ENCODE measurements at regions of chr21 and their contacts with region 1.

Region 1: GRCh38 chr21:44873356-44874239 is at the start of gene PTTG1IP:
- DNase-seq: peak; percentile 98 to 100 (median 99)
- ATAC-seq: peak; percentile 83 to 87 (median 85)
- H3K4me3 ChIP-seq: peak within 1 kb of the TSS; percentile 66 to 98 (median 86)
- H3K27ac ChIP-seq: peak within 1 kb of the TSS; percentile 90 to 99 (median 95)
- H3K4me1 ChIP-seq: peaks cover 0 to 81% (median 52%) of the 10 kb centered on the region in 12 donors
- H3K27me3 ChIP-seq: no peaks in the 10 kb centered on the region
- CTCF ChIP-seq: no peak
- POLR2A ChIP-seq: peak; percentile 69 to 92
- total RNA-seq, gene PTTG1IP: 134 to 319 (median 172) TPM

Region 2: GRCh38 chr21:44801468-44802395 is 71.9 kb before region 1 on chr21 and contains the start of gene UBE2G2:
- intact Hi-C with region 1: loop called (anchors 2 to 5 kb)
- DNase-seq: peak; percentile 82 to 93 (median 86)
- ATAC-seq: peak; percentile 81 to 98 (median 96)
- H3K4me3 ChIP-seq: peak within 1 kb of the TSS; percentile 71 to 97 (median 89)
- H3K27ac ChIP-seq: peak within 1 kb of the TSS; percentile 61 to 86 (median 74)
- H3K4me1 ChIP-seq: peaks cover 0 to 35% (median 21%) of the 10 kb centered on the region in 12 donors
- H3K27me3 ChIP-seq: no peaks in the 10 kb centered on the region
- CTCF ChIP-seq: peak in 1 of 12 donors; percentile 1
- POLR2A ChIP-seq: peak in 1 of 2 donors; percentile 83
- total RNA-seq, gene UBE2G2: 57.4 to 84.4 (median 71.4) TPM

Region 3: GRCh38 chr21:44817506-44817880 is 56.1 kb before region 1 on chr21:
- intact Hi-C with region 1: loop called in 8 of 10 experiments (anchors 2 to 5 kb)
- DNase-seq: peak; percentile 93 to 98 (median 93)
- ATAC-seq: peak; percentile 90 to 98 (median 93)
- H3K4me3 ChIP-seq: peak overlapping the region; percentile 72 to 97 (median 88)
- H3K27ac ChIP-seq: peak overlapping the region; percentile 85 to 99 (median 96)
- H3K4me1 ChIP-seq: peaks cover 0 to 39% (median 24%) of the 10 kb centered on the region in 12 donors
- H3K27me3 ChIP-seq: no peaks in the 10 kb centered on the region
- CTCF ChIP-seq: no peak
- POLR2A ChIP-seq: no peak

Region 4: DNA sequence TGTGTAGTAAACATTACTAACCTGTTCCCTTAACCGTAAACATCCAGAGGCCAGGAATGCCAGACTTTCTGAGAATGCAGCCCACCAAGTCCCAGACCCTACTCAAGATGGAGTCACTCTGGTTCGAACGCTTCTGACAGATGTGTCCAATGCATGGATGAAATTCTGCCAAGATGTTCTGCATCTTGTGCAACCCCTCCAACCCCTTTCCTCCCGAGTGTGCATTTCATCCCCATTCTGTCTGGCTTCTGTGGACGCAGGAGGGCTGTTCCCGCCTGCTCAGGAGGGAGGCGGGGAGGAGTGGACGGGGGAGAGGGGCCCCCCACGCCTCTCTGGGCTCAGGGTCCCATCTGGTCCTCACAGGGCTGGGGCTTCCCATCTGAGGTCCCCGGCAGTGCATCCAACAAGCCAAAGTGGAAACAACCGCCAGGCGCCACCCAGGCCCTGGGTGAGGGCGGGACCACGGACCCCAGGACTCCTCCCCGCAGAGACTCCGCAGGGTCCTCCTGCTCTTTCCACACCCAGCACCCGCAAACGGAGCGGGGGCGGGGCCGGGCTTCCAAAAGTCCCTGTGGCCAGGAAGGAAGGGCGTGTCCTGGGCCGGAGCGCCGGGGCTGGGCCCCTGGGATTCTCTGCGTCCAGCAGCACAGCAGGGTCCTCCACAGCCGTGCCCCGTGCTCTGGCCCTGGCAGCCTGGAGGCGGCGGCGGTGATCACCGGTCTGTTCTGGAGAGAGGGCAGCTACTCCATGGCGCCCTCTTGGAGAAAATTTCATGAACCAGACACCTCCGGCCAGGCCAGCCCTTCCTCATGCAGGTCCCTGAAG is 28.0 kb before region 1 on chr21:
- intact Hi-C with region 1: loop called in 1 of 10 experiments (anchors 2 kb)
- DNase-seq: peak; percentile 74 to 89 (median 81)
- ATAC-seq: peak; percentile 48 to 88 (median 76)
- H3K4me3 ChIP-seq: peak overlapping the region in 10 of 12 donors; percentile 10 to 58 (median 48)
- H3K27ac ChIP-seq: peak overlapping the region in 10 of 12 donors; percentile 12 to 63 (median 46)
- H3K4me1 ChIP-seq: peaks cover 0 to 35% (median 22%) of the 10 kb centered on the region in 12 donors
- H3K27me3 ChIP-seq: no peaks in the 10 kb centered on the region
- CTCF ChIP-seq: peak in 8 of 12 donors; percentile 21 to 53 (median 40)
- POLR2A ChIP-seq: no peak

Region 5: GRCh38 chr21:44927587-44928461 is 54.2 kb after region 1 on chr21:
- intact Hi-C with region 1: loop called in 2 of 10 experiments (anchors 5 to 10 kb)
- DNase-seq: peak in 4 of 5 donors; percentile 45 to 84 (median 66)
- ATAC-seq: peak in 3 of 4 donors; percentile 15 to 63 (median 52)
- H3K4me3 ChIP-seq: peak overlapping the region in 4 of 12 donors; percentile 10 to 57 (median 29)
- H3K27ac ChIP-seq: peak overlapping the region in 3 of 12 donors; percentile 44 to 93 (median 56)
- H3K4me1 ChIP-seq: peaks cover 0 to 91% (median 22%) of the 10 kb centered on the region in 12 donors
- H3K27me3 ChIP-seq: peaks cover 2 to 37% (median 20%) of the 10 kb centered on the region in 9 donors
- CTCF ChIP-seq: no peak
- POLR2A ChIP-seq: no peak

Region 6: GRCh38 chr21:44939532-44940115 is 66.0 kb after region 1 on chr21 and contains the start of gene SLX9:
- intact Hi-C with region 1: loop called in 2 of 10 experiments (anchors 5 to 10 kb)
- DNase-seq: peak; percentile 72 to 90 (median 83)
- ATAC-seq: peak; percentile 58 to 92 (median 87)
- H3K4me3 ChIP-seq: peak within 1 kb of the TSS; percentile 74 to 99 (median 82)
- H3K27ac ChIP-seq: peak within 1 kb of the TSS; percentile 9 to 88 (median 78)
- H3K4me1 ChIP-seq: peaks cover 0 to 37% (median 29%) of the 10 kb centered on the region in 12 donors
- H3K27me3 ChIP-seq: peaks cover 0 to 5% (median 0%) of the 10 kb centered on the region in 9 donors
- CTCF ChIP-seq: no peak
- POLR2A ChIP-seq: peak in 1 of 2 donors; percentile 70
- total RNA-seq, gene SLX9: 38.5 to 53.1 (median 47.1) TPM

Region 7: GRCh38 chr21:45287438-45288391 is 414.1 kb after region 1 on chr21 and contains the start of gene POFUT2:
- intact Hi-C with region 1: no loop called
- DNase-seq: peak; percentile 97 to 99 (median 97)
- ATAC-seq: peak; percentile 83 to 93 (median 89)
- H3K4me3 ChIP-seq: peak within 1 kb of the TSS; percentile 47 to 91 (median 76)
- H3K27ac ChIP-seq: peak within 1 kb of the TSS; percentile 50 to 90 (median 80)
- H3K4me1 ChIP-seq: peaks cover 0 to 38% (median 25%) of the 10 kb centered on the region in 12 donors
- H3K27me3 ChIP-seq: no peaks in the 10 kb centered on the region
- CTCF ChIP-seq: no peak
- POLR2A ChIP-seq: peak; percentile 37 to 88
- total RNA-seq, gene POFUT2: 10.8 to 22.0 (median 18.5) TPM